Endothelial cell of umbilical vein (primary cell): ENCODE measurements at regions of chr3 and their contacts with region 1.

Region 1: DNA sequence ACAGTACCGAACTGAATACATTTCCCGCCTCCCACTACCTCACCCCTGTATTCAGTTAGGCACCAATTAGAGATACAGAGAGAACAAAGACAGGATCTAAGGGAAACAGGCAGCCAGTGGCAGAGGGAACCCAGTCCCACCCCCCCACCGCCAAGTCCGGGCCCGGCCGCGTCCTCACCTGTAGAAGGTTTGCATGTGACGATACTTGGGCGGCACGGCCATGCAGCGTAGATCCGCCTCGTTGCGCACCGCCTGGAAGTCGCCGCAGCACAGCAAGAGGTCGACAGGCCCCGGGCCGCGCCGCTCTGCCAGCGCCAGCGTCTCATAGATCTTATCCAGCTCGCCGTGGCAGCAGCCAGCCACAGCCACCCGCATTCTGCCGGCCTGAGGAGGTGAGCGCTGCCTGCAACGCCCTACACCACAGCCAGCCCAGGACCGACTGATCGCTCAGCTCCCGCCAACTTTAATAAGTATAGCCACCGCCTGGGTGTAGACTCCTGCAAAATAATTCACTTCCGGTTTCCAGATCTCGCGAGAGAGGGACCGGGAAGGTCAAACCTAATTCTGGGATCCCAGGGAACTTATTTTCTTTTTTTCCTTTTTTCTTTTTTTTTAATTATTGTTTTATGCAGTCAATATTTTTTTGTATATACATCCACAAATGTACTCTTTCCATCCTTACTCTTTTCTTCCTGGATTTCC is at the start of gene DBR1:
- DNase-seq: peak; percentile 81
- H3K4me3 ChIP-seq: peak within 1 kb of the TSS; percentile 42 to 84 (median 61)
- H3K27ac ChIP-seq: peak within 1 kb of the TSS; percentile 46
- H3K4me1 ChIP-seq: peaks cover 13% of the 10 kb centered on the region
- H3K27me3 ChIP-seq: peaks cover 0 to 3% of the 10 kb centered on the region in 2 experiments
- CTCF ChIP-seq: no peak
- POLR2A ChIP-seq: peak; percentile 96
- total RNA-seq, gene DBR1: 16.5 and 17.8 TPM in 2 replicates

Region 2: GRCh38 chr3:138068579-138069174 is 105.9 kb before region 1 on chr3:
- CTCF ChIA-PET with region 1: no interaction called
- POLR2A ChIA-PET with region 1: no interaction called
- dilution Hi-C with region 1: no loop called
- intact Hi-C with region 1: loop called (anchors 5 kb)
- DNase-seq: peak; percentile 62
- H3K4me3 ChIP-seq: no peak overlapping the region
- H3K27ac ChIP-seq: no peak overlapping the region
- H3K4me1 ChIP-seq: no peaks in the 10 kb centered on the region
- H3K27me3 ChIP-seq: no peaks in the 10 kb centered on the region
- CTCF ChIP-seq: peak; percentile 95 to 98
- POLR2A ChIP-seq: no peak

Region 3: DNA sequence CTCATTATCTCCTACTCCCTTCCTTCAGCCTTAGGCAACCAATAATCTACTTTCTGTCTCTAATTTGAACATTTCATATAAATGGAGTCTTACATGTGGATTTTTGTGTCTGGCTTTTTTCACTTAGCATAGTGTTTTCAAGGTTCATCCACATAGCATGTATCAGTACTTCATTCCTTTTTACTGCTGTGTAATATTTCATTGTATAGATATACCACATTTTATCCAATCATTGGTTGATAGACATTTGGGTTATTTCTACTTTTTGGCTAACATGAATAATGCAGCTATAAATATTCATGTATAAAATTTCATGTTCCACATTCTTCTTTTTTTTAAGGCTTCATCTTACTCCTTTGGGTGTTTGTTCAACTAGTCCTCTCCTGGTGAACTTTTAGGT is 20.0 kb before region 1 on chr3:
- CTCF ChIA-PET with region 1: no interaction called
- POLR2A ChIA-PET with region 1: no interaction called
- dilution Hi-C with region 1: no loop called
- intact Hi-C with region 1: no loop called
- DNase-seq: no peak
- H3K4me3 ChIP-seq: no peak overlapping the region
- H3K27ac ChIP-seq: no peak overlapping the region
- H3K4me1 ChIP-seq: no peaks in the 10 kb centered on the region
- H3K27me3 ChIP-seq: no peaks in the 10 kb centered on the region
- CTCF ChIP-seq: no peak
- POLR2A ChIP-seq: no peak

Region 4: GRCh38 chr3:138797508-138798038 is 623.0 kb after region 1 on chr3:
- CTCF ChIA-PET with region 1: no interaction called
- POLR2A ChIA-PET with region 1: no interaction called
- dilution Hi-C with region 1: no loop called
- intact Hi-C with region 1: no loop called
- DNase-seq: no peak
- H3K4me3 ChIP-seq: no peak overlapping the region
- H3K27ac ChIP-seq: no peak overlapping the region
- H3K4me1 ChIP-seq: no peaks in the 10 kb centered on the region
- H3K27me3 ChIP-seq: no peaks in the 10 kb centered on the region
- CTCF ChIP-seq: no peak
- POLR2A ChIP-seq: no peak